Ovary (tissue), 10 donors: ENCODE measurements at regions of chr13 and their contacts with region 1.

Region 1: GRCh38 chr13:110705826-110706569 is at the start of gene CARS2:
- DNase-seq: peak; percentile 92 to 96 (median 94)
- H3K4me3 ChIP-seq: peak within 1 kb of the TSS; percentile 74
- H3K27ac ChIP-seq: peak within 1 kb of the TSS in 1 of 2 donors; percentile 55
- H3K4me1 ChIP-seq: peaks cover 10% of the 10 kb centered on the region
- H3K27me3 ChIP-seq: no peaks in the 10 kb centered on the region
- CTCF ChIP-seq: peak in 1 of 3 donors; percentile 41
- EP300 ChIP-seq: no peak
- POLR2A ChIP-seq: peak; percentile 38
- total RNA-seq, gene CARS2: 34.1 to 56.7 (median 44.3) TPM

Region 2: DNA sequence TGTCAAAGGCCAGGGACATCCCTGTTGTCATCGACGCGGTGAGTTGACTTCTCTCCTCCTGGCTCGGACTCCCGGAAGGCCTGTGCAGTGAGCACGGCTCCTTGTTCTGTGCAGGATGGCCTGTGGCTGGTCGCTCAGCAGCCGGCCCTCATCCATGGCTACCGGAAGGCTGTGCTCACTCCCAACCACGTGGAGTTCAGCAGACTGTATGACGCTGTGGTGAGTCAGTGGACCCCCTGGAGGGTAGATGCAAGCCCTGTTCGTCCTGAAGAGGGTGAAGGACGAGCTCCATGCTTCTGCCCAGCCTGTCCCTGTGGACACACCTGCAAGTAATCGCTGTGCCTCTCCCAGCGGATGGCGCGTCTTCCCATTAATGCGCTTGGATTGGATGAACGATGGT is 71.4 kb before region 1 on chr13:
- intact Hi-C with region 1: loop called in 1 of 4 experiments (anchors 10 kb)
- DNase-seq: no peak
- H3K4me3 ChIP-seq: no peak overlapping the region
- H3K27ac ChIP-seq: no peak overlapping the region
- H3K4me1 ChIP-seq: peaks cover 5% of the 10 kb centered on the region
- H3K27me3 ChIP-seq: no peaks in the 10 kb centered on the region
- CTCF ChIP-seq: no peak
- EP300 ChIP-seq: no peak
- POLR2A ChIP-seq: no peak

Region 3: GRCh38 chr13:110644892-110645521 is 61.0 kb before region 1 on chr13:
- intact Hi-C with region 1: loop called in 1 of 4 experiments (anchors 10 kb)
- DNase-seq: peak in 4 of 5 donors; percentile 65 to 78 (median 73)
- H3K4me3 ChIP-seq: no peak overlapping the region
- H3K27ac ChIP-seq: no peak overlapping the region
- H3K4me1 ChIP-seq: peaks cover 7% of the 10 kb centered on the region
- H3K27me3 ChIP-seq: no peaks in the 10 kb centered on the region
- CTCF ChIP-seq: no peak
- EP300 ChIP-seq: no peak
- POLR2A ChIP-seq: no peak